Activated CD4-positive, alpha-beta memory T cell treated with anti-CD3 and anti-CD28 coated beads, Interleukin-2, amount 10 ng/mL, durations not matched to agents 7 days and 5 days (primary cell): ENCODE measurements at regions of chr12 and their contacts with region 1.

Region 1: DNA sequence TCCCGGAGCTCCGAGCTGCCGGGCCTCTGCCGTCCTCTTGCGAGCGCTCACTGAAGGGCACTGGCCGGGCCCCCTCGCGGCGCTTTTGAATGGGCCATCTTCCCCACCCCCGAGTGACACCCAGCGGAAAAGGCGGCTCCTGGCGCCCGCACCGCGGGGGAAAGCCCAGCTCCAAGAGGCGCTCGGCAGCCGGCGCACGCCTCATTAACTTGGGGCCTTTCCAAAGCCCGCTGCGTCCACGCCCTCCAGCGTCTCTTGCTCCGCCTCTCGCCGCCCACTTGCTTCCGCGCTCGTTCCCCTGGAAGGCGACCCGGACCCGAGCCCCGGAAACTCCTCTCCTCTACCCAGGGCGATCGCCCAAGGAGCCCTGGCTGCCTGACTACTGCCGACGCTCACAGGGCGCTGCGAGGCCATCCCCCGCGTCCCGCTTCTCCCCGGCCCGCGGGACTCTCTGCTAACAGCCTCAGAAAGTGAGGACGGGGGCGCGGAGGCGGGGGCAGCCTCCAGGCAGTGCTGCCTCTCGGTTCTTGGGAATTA is at the start of gene PHLDA1:
- DNase-seq: peak; percentile 95
- H3K4me3 Mint-ChIP-seq: peak within 1 kb of the TSS; percentile 98
- H3K27ac Mint-ChIP-seq: peak within 1 kb of the TSS; percentile 95
- H3K4me1 Mint-ChIP-seq: peaks cover 59% of the 10 kb centered on the region
- H3K27me3 Mint-ChIP-seq: peaks cover 3% of the 10 kb centered on the region
- total RNA-seq, gene PHLDA1: 42.8 TPM

Region 2: DNA sequence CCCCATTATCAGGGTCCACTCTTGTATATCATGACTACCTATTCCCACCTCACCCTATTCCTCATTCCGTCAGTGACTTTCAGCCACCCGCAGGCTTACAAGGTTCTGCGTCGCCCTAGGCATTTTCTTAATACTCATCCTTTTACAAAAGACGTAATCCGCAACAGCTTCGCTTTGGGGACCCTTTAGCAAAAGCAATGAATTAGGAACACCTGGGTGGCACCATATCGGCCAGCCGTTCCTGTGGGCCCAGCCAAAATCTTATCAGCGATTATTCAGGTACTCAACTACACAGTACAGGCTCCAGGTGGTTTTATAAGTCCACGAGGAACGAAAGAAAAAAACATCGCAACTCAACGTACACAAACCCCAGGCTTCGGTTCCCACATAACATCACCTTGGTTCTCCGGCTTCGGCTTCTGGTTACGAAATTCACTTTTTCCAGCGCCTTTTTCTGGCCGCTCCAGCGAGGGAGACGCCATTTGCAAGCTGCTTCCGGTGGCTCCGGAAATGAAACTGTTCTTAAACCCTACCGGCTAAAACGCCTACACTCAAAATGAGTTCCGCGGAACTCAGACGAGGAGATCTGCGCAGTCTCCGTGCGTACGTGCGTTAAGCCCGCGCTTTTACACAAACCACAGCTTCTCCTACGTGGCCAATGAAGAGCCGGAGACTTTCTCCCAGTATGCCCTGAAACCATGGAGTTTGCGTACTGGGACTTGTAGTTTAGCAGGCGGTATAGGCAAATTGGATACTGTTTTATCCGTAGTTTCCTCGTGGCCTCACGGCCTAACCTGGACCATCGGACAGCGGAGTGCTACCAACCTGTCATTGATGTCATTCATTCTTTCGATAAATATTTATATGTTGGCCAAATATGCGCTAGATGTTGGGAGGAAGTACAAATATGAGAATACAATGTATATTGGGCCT is 520.2 kb before region 1 on chr12 and contains the start of gene KRR1:
- CTCF ChIA-PET with region 1: interaction called, 4 read pairs
- POLR2A ChIA-PET with region 1: interaction called, 33 read pairs
- DNase-seq: peak; percentile 94
- H3K4me3 Mint-ChIP-seq: peak within 1 kb of the TSS; percentile 96
- H3K27ac Mint-ChIP-seq: peak within 1 kb of the TSS; percentile 98
- H3K4me1 Mint-ChIP-seq: peaks cover 33% of the 10 kb centered on the region
- H3K27me3 Mint-ChIP-seq: no peaks in the 10 kb centered on the region
- total RNA-seq, gene KRR1: 61.8 to 67.2 TPM

Region 3: GRCh38 chr12:75641031-75641780 is 390.4 kb before region 1 on chr12:
- CTCF ChIA-PET with region 1: interaction called, 13 read pairs
- POLR2A ChIA-PET with region 1: interaction called, 9 read pairs
- DNase-seq: peak; percentile 71
- H3K4me3 Mint-ChIP-seq: peak overlapping the region; percentile 0
- H3K27ac Mint-ChIP-seq: peak overlapping the region; percentile 38
- H3K4me1 Mint-ChIP-seq: peaks cover 51% of the 10 kb centered on the region
- H3K27me3 Mint-ChIP-seq: no peaks in the 10 kb centered on the region

Region 4: DNA sequence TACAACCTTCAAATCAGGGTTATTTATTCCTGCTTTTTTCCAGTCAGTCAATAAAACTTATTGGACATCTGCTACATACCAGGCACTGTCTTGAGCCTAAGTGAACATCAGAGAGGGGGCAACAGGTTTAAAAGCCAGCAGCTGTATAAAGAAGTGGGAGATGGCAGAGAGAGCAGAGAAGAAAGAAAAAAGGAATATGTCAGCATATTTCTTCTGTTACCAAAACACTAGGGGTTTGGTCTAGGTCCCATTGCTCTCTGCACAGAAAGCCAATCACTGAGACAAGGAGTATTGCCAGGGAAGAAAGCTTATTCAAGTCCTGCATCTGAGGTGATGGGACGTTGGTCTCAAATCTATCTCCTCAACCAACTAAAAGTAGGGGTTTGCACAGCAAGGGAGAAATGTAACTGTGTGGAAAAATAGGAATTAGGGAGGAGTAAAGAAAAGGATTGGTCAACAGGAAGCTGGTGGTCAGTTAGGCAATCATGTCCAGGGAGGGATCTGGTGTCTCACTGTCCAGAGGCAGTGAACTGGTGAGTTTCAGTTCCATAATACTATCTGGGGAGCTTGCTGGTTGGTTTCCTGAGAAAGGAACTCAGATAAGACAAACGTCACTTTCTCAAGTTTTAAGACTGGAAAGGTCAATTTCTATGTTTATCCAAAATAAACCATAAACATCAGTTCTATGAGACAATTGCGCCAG is 107.5 kb before region 1 on chr12:
- CTCF ChIA-PET with region 1: interaction called, 11 read pairs
- POLR2A ChIA-PET with region 1: interaction called, 34 read pairs
- DNase-seq: no peak
- H3K4me3 Mint-ChIP-seq: no peak overlapping the region
- H3K27ac Mint-ChIP-seq: no peak overlapping the region
- H3K4me1 Mint-ChIP-seq: peaks cover 26% of the 10 kb centered on the region
- H3K27me3 Mint-ChIP-seq: peaks cover 1% of the 10 kb centered on the region

Region 5: GRCh38 chr12:75944097-75944904 is 87.3 kb before region 1 on chr12:
- CTCF ChIA-PET with region 1: interaction called, 23 read pairs
- POLR2A ChIA-PET with region 1: interaction called, 123 read pairs
- DNase-seq: peak; percentile 31
- H3K4me3 Mint-ChIP-seq: peak overlapping the region; percentile 50
- H3K27ac Mint-ChIP-seq: peak overlapping the region; percentile 99
- H3K4me1 Mint-ChIP-seq: peaks cover 38% of the 10 kb centered on the region
- H3K27me3 Mint-ChIP-seq: no peaks in the 10 kb centered on the region

Region 6: DNA sequence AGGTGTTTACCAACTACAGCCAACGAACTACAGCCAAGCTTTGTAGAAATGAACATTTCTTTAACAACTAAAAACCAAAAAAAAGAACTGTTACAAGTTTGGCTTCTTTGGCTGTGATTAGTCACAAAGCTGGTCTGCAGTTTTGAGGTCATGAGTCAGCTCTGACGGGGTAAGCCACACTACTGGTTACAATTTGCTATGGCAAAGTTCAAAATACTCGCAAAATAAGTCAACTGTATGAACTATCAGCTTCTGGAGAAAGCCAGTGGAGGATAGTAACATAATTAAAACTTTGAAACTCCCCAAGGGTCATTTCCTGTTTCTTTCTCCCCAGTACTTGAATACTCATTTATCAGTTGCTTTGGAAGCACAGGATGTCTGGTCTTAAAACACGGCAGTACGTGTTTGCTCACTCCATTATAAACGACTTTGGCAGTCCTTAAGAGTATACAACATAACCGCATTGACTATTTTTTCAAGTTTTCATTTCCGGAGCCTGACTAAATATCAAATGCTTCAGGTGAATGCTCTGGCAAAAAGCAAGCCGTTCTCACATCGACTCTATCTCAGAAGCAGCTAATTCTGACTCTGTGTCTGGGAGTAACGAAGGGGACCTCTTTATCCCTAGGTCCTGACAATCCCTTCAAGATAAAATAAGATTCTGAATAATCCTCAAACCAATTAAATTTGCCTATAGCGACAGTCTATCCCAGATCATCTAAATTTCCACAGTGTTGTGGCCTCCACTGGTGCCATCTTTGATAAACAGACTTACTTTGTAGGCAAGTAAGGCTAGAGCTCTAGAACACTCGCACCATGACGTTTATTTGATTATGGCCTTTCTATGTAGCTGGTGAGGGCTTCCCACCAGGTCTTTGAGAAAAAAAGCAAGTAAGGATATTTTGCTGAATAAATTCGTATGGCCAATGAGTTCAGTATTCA is 10.6 kb before region 1 on chr12:
- CTCF ChIA-PET with region 1: interaction called, 55 read pairs
- POLR2A ChIA-PET with region 1: interaction called, 246 read pairs
- DNase-seq: peak; percentile 83
- H3K4me3 Mint-ChIP-seq: peak overlapping the region; percentile 53
- H3K27ac Mint-ChIP-seq: peak overlapping the region; percentile 100
- H3K4me1 Mint-ChIP-seq: peaks cover 69% of the 10 kb centered on the region
- H3K27me3 Mint-ChIP-seq: no peaks in the 10 kb centered on the region